Breast epithelium (tissue), 4 donors: ENCODE measurements at regions of chr16 and their contacts with region 1.

Region 1: GRCh38 chr16:49061137-49061714 is 220.4 kb downstream of the CBLN1 start:
- DNase-seq: no peak
- H3K4me3 ChIP-seq: no peak overlapping the region
- H3K27ac ChIP-seq: no peak overlapping the region
- H3K4me1 ChIP-seq: no peaks in the 10 kb centered on the region
- H3K27me3 ChIP-seq: peaks cover 0 to 7% of the 10 kb centered on the region in 2 donors
- CTCF ChIP-seq: no peak
- POLR2A ChIP-seq: no peak

Region 2: DNA sequence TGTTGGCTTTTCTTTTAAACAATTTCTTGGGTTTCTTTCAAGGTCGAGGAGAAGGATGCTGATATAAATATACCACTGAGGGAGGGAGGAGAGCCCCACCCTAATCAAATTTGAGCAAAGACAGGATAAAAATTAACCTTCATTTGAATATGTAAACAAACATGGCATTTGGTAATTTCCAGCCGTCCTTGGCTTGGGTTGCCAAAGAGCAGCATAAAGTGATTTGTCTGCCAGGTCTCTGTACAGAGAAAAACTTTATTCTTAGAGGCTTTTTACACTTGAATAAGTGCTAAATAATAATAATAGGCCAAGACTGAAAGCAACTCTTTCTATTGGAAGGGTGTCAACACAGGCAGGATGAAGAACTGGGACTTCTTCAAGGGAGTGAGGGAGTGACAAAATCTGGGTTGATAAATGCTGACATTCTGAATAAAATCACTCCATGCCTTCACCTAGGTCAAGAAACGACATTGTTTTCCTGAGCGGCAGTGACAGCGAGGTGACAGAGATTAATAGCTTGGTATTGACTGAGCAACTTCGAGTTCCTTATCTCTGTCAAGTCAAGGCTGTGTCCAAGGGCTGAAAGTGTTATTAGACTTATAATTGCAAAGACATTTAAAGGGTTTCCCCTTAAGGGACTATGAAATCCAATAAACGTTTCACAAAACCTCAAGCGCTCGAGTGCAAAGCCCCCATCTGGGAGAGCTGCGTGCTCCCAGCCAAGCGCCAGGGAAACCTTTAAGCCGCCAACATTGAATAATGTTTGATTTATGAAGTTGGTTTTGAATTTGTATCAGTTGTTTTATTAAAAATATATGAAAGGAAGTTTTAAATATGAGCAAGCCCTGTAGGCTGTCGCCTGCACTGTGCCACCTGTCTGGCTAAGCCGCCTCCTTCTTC is 181.8 kb before region 1 on chr16:
- intact Hi-C with region 1: loop called (anchors 5 kb)
- DNase-seq: no peak
- H3K4me3 ChIP-seq: no peak overlapping the region
- H3K27ac ChIP-seq: no peak overlapping the region
- H3K4me1 ChIP-seq: no peaks in the 10 kb centered on the region
- H3K27me3 ChIP-seq: no peaks in the 10 kb centered on the region
- CTCF ChIP-seq: no peak
- POLR2A ChIP-seq: no peak

Region 3: DNA sequence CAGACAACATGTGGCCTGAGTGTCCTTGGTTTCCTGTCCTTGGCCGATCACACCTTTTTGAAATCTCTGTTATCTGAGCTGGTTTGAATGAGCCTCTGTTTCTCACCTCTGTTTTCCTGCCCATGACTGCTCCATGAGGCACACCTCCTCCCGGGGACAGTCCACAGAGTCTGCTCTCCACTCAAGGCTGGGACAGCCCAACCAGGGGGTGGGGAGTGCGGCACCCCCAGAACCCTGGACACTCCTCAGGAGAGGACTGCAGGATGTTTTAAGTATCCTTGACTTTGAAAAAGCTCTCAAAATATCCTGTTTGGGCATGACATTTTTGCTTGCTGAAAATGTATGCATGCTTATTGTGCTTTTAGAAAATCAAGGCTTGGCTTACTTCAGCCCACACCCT is 118.2 kb before region 1 on chr16:
- intact Hi-C with region 1: no loop called
- DNase-seq: no peak
- H3K4me3 ChIP-seq: no peak overlapping the region
- H3K27ac ChIP-seq: no peak overlapping the region
- H3K4me1 ChIP-seq: no peaks in the 10 kb centered on the region
- H3K27me3 ChIP-seq: no peaks in the 10 kb centered on the region
- CTCF ChIP-seq: no peak
- POLR2A ChIP-seq: no peak

Region 4: DNA sequence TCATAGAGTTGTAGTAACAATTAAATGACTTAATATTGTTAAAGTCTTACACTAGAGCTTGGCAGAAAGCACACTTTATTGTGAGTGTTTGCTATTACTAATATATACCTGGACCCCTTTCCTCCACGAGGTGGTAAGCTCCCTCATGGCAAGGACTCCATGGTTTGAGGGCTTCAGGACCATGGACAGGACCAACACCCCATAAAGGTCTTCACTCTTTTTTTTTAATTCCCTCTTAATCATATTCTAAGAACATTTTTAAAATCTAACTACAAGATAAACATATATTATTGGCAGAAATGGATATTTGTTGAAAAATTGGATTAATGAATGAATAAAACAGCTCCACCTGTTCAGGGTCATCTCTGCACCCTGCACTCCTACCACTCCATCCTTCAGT is 65.9 kb after region 1 on chr16:
- intact Hi-C with region 1: no loop called
- DNase-seq: no peak
- H3K4me3 ChIP-seq: no peak overlapping the region
- H3K27ac ChIP-seq: no peak overlapping the region
- H3K4me1 ChIP-seq: no peaks in the 10 kb centered on the region
- H3K27me3 ChIP-seq: no peaks in the 10 kb centered on the region
- CTCF ChIP-seq: no peak
- POLR2A ChIP-seq: no peak